Kidney (tissue), 22 donors: ENCODE measurements at regions of chr10 and their contacts with region 1.

Region 1: DNA sequence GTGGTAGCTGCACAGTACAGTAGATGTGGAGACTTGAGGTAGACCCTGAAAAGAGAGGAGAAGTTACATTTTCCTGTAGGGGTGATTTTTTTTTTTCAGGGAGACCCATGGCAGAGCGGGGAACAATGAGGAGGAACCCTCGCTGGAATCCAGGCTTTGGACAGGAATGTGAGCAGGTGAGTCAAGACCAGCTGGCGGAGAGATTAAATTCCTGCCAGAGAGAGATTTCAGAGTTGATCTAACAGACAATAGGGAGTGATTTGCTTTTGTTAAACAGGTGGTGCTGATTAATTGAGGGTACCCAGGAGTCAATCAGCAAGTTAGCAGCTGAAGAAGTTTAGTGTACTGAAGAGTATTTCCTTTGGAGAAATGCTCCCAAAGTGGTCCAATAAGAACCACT is 41.6 kb upstream of the MINDY3 start:
- DNase-seq: no peak
- H3K4me3 ChIP-seq: no peak overlapping the region
- H3K27ac ChIP-seq: no peak overlapping the region
- H3K4me1 ChIP-seq: no peaks in the 10 kb centered on the region
- H3K27me3 ChIP-seq: no peaks in the 10 kb centered on the region
- CTCF ChIP-seq: no peak

Region 2: DNA sequence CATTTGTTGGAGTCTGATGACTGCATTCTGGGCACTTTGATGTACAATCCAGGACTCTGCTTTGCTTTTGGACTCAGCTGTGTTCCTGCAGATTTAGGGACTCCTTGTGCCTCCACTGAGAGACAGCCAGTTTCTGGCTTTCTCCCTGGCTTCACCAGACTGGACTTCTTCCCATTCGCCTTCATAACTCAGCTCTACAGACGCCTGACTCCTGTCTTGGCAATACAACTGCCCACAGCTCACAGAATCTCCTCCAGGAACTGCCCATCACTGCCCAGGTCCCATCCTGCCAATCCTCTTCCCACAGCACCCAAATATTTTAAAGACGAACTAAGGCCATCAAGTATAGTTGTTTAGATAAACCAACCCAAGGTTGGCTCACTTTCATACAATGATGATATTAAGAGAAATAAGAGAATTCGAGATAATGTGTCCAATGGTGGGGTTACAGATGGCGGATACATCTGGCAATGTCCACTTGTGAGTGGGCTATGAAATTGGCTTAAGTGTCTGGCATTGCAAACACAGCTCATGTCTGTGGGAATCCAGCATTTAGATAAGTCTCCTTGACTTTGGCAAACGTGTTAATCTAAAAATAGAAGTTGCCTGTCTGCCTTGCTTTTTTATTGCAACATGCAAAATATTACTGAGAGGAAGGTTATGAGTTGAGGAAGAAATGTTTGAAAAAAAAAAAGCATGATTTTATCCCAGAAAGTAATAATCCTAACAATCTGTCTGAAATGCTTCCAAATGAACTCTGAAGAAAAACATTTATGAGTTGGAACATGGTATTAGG is 277.3 kb before region 1 on chr10:
- intact Hi-C with region 1: no loop called
- DNase-seq: peak in 1 of 5 donors; percentile 20
- H3K4me3 ChIP-seq: no peak overlapping the region
- H3K27ac ChIP-seq: peak overlapping the region; percentile 28 to 32
- H3K4me1 ChIP-seq: no peaks in the 10 kb centered on the region
- H3K27me3 ChIP-seq: no peaks in the 10 kb centered on the region
- CTCF ChIP-seq: no peak

Region 3: GRCh38 chr10:16777473-16778370 is 875.8 kb after region 1 on chr10:
- intact Hi-C with region 1: loop called (anchors 5 kb)
- DNase-seq: peak in 4 of 5 donors; percentile 50 to 86 (median 68)
- H3K4me3 ChIP-seq: no peak overlapping the region
- H3K27ac ChIP-seq: no peak overlapping the region
- H3K4me1 ChIP-seq: peaks cover 0 to 2% (median 0%) of the 10 kb centered on the region in 3 donors
- H3K27me3 ChIP-seq: no peaks in the 10 kb centered on the region
- CTCF ChIP-seq: peak; percentile 65